PC-9 (cell line): ENCODE measurements at regions of chr11 and their contacts with region 1.

Region 1: GRCh38 chr11:58579192-58580129 is 598 bp downstream of the ZFP91 start:
- DNase-seq: peak; percentile 68 to 85
- H3K4me3 ChIP-seq: peak overlapping the region; percentile 82
- H3K27ac ChIP-seq: peak overlapping the region; percentile 86
- H3K4me1 ChIP-seq: peaks cover 59% of the 10 kb centered on the region
- H3K27me3 ChIP-seq: no peaks in the 10 kb centered on the region
- CTCF ChIP-seq: peak; percentile 77

Region 2: GRCh38 chr11:57657194-57658022 is 922.1 kb before region 1 on chr11 and contains the start of gene CLP1:
- CTCF ChIA-PET with region 1: no interaction called
- POLR2A ChIA-PET with region 1: no interaction called
- intact Hi-C with region 1: loop called (anchors 1 kb)
- DNase-seq: peak; percentile 98 to 100
- H3K4me3 ChIP-seq: peak within 1 kb of the TSS; percentile 96
- H3K27ac ChIP-seq: peak within 1 kb of the TSS; percentile 25
- H3K4me1 ChIP-seq: peaks cover 7% of the 10 kb centered on the region
- H3K27me3 ChIP-seq: no peaks in the 10 kb centered on the region
- CTCF ChIP-seq: peak; percentile 13; the same call in 1 of the 2 replicates
- total RNA-seq, gene CLP1: 23.4 and 24.2 TPM in 2 replicates

Region 3: DNA sequence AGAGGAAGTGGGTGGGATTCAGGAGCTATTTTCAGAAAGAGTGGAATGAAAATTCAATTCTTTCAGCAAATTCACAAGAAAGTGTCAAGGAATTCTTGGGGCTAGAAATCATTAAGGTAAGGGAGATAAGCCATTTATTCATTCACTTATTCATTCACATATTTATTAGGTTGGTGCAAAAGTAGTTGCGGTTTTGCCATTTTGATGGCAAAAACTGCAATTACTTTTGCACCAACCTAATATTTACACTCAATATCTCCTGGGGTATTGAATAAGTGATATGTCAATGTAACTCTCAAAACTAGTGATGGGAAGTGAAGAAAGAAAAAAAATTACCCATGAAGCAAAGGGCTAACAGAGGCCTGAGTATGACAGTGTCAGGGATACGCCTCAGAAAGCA is 311.3 kb before region 1 on chr11 and contains the start of gene OR10W1:
- CTCF ChIA-PET with region 1: no interaction called
- POLR2A ChIA-PET with region 1: no interaction called
- intact Hi-C with region 1: no loop called
- DNase-seq: no peak
- H3K4me3 ChIP-seq: no peak within 1 kb of the TSS
- H3K27ac ChIP-seq: no peak within 1 kb of the TSS
- H3K4me1 ChIP-seq: no peaks in the 10 kb centered on the region
- H3K27me3 ChIP-seq: no peaks in the 10 kb centered on the region
- CTCF ChIP-seq: no peak
- total RNA-seq, gene OR10W1: not detected in 2 replicates

Region 4: GRCh38 chr11:58592760-58593472 is 13.5 kb after region 1 on chr11:
- CTCF ChIA-PET with region 1: no interaction called
- POLR2A ChIA-PET with region 1: no interaction called
- intact Hi-C with region 1: no loop called
- DNase-seq: no peak
- H3K4me3 ChIP-seq: no peak overlapping the region
- H3K27ac ChIP-seq: no peak overlapping the region
- H3K4me1 ChIP-seq: no peaks in the 10 kb centered on the region
- H3K27me3 ChIP-seq: no peaks in the 10 kb centered on the region
- CTCF ChIP-seq: no peak

Region 5: DNA sequence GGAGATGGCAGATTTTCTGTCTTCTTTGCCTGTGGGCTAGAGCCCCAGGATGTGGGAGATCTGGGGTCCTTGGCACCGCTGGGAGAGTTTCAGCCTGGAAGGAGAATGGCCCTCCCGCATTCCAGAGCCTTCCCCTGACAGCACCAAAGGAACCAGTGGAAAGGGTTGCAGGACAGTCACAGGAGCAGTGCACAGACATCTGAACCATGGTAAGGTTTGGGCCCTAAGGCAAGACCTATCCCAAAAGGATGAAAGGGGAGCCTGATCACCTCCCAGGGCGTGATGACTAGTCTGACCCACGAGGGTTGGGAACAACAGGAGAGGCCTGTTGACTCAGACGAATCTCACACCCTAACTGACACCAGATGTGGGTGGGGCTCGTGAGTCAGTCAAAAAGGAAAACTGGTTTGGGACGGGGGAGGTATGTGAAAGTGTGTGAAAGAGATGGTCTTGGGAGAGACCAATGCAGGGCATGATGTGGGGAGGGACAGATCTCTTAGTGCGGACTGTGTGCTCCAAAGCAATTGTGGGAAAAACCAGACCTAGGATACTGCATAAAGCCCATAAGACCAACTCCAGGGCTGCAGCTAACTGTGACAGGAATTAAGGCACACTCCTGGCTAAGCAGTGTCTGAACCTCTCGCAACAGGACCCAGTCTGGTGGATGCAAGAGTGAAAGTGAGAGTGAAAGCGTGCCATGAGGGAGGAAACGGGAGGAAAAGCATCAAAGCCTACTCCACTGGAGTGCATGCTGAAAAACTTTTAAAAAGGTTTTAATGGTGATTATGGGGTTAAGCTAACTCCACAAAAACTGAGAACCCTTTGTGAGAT is 191.4 kb after region 1 on chr11:
- CTCF ChIA-PET with region 1: interaction called, 3 read pairs
- POLR2A ChIA-PET with region 1: no interaction called
- intact Hi-C with region 1: loop called (anchors 2 kb)
- DNase-seq: peak; percentile 66 to 89
- H3K4me3 ChIP-seq: no peak overlapping the region
- H3K27ac ChIP-seq: peak overlapping the region; percentile 81
- H3K4me1 ChIP-seq: peaks cover 33% of the 10 kb centered on the region
- H3K27me3 ChIP-seq: no peaks in the 10 kb centered on the region
- CTCF ChIP-seq: no peak

Region 6: DNA sequence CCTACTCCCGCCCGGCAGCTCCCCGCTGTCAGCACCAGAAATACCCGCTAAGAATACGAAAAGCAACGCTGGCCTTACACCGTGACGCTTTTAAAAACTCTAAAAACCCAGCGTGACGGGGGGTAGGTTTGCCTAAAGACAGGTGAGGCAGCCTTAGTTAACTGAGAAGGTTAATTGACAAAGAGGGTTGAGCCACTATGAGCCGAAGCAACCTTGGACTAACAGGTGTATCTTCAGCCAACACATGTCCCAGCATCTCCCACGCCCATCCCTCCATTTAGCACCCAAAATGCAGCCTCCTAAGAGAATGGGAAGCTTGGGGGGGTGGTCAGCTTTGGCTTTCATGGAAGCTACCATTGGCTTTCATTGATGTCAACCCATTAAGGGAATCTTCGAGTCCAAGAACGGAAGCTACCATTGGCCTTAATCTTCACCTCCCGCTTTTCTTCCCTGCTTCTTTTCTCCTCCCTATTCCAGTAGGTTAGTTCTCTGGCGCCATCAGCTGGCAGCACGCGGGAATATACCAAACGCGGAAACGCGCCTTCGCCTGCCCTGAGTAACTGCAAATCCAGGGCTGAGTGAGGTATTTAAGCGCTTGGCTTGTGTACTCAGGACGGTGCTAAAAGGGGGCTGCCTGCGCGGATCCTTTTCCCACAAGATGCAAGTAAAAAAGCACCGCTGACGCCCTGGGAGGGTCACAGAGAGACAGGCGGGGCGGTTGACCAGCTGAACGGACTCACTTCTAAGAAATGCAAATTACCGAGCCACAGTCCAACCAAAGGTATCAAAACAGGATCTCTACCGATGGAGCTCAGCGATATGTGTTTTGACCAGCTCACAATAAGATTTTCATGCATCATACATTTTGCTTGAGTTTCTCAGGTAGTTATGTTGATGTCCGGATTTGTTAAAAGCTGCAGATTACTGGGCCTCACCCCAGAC is 321.3 kb after region 1 on chr11:
- CTCF ChIA-PET with region 1: no interaction called
- POLR2A ChIA-PET with region 1: no interaction called
- intact Hi-C with region 1: loop called (anchors 5 kb)
- DNase-seq: peak; percentile 40 to 66
- H3K4me3 ChIP-seq: no peak overlapping the region
- H3K27ac ChIP-seq: no peak overlapping the region
- H3K4me1 ChIP-seq: no peaks in the 10 kb centered on the region
- H3K27me3 ChIP-seq: peaks cover 4% of the 10 kb centered on the region; the same call in 1 of the 2 replicates
- CTCF ChIP-seq: peak; percentile 63

Region 7: GRCh38 chr11:59142530-59143507 is 563.4 kb after region 1 on chr11 and contains the start of gene FAM111A:
- CTCF ChIA-PET with region 1: interaction called, 4 read pairs
- POLR2A ChIA-PET with region 1: no interaction called
- intact Hi-C with region 1: loop called (anchors 1 kb)
- DNase-seq: peak; percentile 91 to 94
- H3K4me3 ChIP-seq: peak within 1 kb of the TSS; percentile 72
- H3K27ac ChIP-seq: peak within 1 kb of the TSS; percentile 61
- H3K4me1 ChIP-seq: peaks cover 37% of the 10 kb centered on the region
- H3K27me3 ChIP-seq: no peaks in the 10 kb centered on the region
- CTCF ChIP-seq: no peak; the same call in 1 of the 2 replicates
- total RNA-seq, gene FAM111A: 57.8 and 95.3 TPM in 2 replicates